ENCODE measurements at regions of chr12 and their contacts with region 1.

Region 1: DNA sequence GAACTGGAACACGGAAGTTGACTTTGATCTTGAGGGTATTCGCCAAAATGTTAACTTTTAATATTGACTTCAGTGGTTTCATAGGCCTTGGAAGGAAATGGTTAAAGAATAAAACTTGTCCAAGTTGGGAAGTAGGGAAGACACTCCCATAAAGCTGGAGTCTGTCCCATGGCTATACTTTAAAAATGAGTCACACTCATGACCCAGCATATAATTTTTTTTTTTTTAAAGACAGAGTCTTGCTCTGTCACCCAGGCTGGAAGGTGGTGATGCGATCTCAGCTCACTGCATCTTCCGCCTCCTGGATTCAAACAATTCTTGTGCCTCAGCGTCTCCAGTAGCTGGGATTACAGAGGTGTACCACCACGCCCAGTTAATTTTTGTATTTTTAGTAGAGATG is 19.6 kb downstream of the TMPRSS12 start:
- DNase-seq: peak; percentile 78
- ATAC-seq: peak; percentile 98
- H3K4me3 ChIP-seq: no peak overlapping the region
- H3K27ac ChIP-seq: no peak overlapping the region
- H3K4me1 ChIP-seq: peaks cover 4% of the 10 kb centered on the region; the same call in 1 of the 2 replicates
- H3K27me3 ChIP-seq: no peaks in the 10 kb centered on the region
- CTCF ChIP-seq: no peak

Region 2: GRCh38 chr12:50882563-50882962 is 20.2 kb after region 1 on chr12:
- CTCF ChIA-PET with region 1: interaction called, 13 read pairs
- POLR2A ChIA-PET with region 1: no interaction called
- intact Hi-C with region 1: no loop called
- DNase-seq: no peak
- ATAC-seq: no peak
- H3K4me3 ChIP-seq: no peak overlapping the region
- H3K27ac ChIP-seq: no peak overlapping the region
- H3K4me1 ChIP-seq: no peaks in the 10 kb centered on the region; the same call in 1 of the 2 replicates
- H3K27me3 ChIP-seq: no peaks in the 10 kb centered on the region
- CTCF ChIP-seq: no peak

Region 3: GRCh38 chr12:50924439-50925341 is 62.4 kb after region 1 on chr12:
- CTCF ChIA-PET with region 1: no interaction called
- POLR2A ChIA-PET with region 1: no interaction called
- intact Hi-C with region 1: loop called (anchors 10 kb)
- DNase-seq: peak; percentile 78
- ATAC-seq: peak; percentile 53
- H3K4me3 ChIP-seq: peak overlapping the region; percentile 58
- H3K27ac ChIP-seq: no peak overlapping the region
- H3K4me1 ChIP-seq: peaks cover 14% of the 10 kb centered on the region
- H3K27me3 ChIP-seq: no peaks in the 10 kb centered on the region
- CTCF ChIP-seq: no peak

Region 4: DNA sequence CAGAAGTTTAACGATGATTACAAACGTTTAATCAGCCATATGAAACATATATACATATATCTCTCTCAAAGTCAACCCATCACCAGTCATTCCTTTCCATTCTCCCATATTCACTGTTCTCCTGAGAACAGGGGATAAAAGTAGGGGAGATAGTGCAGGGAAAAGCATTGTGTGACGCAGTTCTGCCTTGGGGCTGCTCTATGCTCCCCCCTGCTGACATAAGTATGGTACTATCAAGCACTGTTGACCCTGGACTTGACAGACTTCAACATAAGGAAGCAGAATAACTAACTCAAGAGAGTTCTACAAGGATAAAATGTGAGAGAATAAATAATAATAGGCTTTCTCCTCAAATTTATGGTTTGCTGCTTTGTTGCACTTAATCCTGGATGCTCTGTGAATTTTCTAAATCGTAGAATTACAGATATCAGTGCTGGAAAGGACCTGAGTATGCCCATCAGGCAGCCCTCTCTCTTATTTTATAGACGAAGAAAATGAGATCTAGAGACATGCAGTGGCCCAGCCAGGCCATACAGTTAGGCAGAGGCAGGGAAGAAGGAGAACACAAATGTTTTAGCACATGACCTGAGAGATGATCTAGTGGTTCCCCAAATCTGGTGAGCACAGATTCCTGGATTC is 815.9 kb after region 1 on chr12:
- CTCF ChIA-PET with region 1: no interaction called
- POLR2A ChIA-PET with region 1: no interaction called
- intact Hi-C with region 1: no loop called
- DNase-seq: peak; percentile 69
- ATAC-seq: peak; percentile 97
- H3K4me3 ChIP-seq: no peak overlapping the region
- H3K27ac ChIP-seq: no peak overlapping the region
- H3K4me1 ChIP-seq: peaks cover 7% of the 10 kb centered on the region
- H3K27me3 ChIP-seq: no peaks in the 10 kb centered on the region
- CTCF ChIP-seq: peak; percentile 88

Measured in PC-3 (cell line).